H1 (cell line): ENCODE measurements at regions of chr9 and their contacts with region 1.

Region 1: GRCh38 chr9:77648234-77649120 is at the start of gene GNA14:
- DNase-seq: peak in 1 of 2 experiments; percentile 85
- H3K4me3 ChIP-seq: peak within 1 kb of the TSS; percentile 47 to 79 (median 75)
- H3K27ac ChIP-seq: no peak within 1 kb of the TSS
- H3K4me1 ChIP-seq: peaks cover 0 to 17% (median 4%) of the 10 kb centered on the region in 4 experiments; a peak in 6 of 7 replicates
- H3K27me3 ChIP-seq: peaks cover 6 to 32% (median 21%) of the 10 kb centered on the region in 4 experiments
- CTCF ChIP-seq: peak; percentile 26 to 36 (median 27)
- EP300 ChIP-seq: no peak
- POLR2A ChIP-seq: no peak
- RAD21 ChIP-seq: peak; percentile 48 to 54
- total RNA-seq, gene GNA14: 3.2 and 3.4 TPM in 2 replicates

Region 2: GRCh38 chr9:77417566-77417965 is 230.9 kb before region 1 on chr9:
- CTCF ChIA-PET with region 1: no interaction called
- POLR2A ChIA-PET with region 1: no interaction called
- DNase-seq: no peak
- H3K4me3 ChIP-seq: no peak overlapping the region
- H3K27ac ChIP-seq: no peak overlapping the region
- H3K4me1 ChIP-seq: no peaks in the 10 kb centered on the region
- H3K27me3 ChIP-seq: no peaks in the 10 kb centered on the region
- CTCF ChIP-seq: no peak
- EP300 ChIP-seq: no peak
- POLR2A ChIP-seq: no peak
- RAD21 ChIP-seq: no peak

Region 3: GRCh38 chr9:77659926-77660325 is 11.4 kb after region 1 on chr9:
- CTCF ChIA-PET with region 1: interaction called, 17 read pairs
- POLR2A ChIA-PET with region 1: interaction called, 4 read pairs
- DNase-seq: no peak
- H3K4me3 ChIP-seq: no peak overlapping the region
- H3K27ac ChIP-seq: no peak overlapping the region
- H3K4me1 ChIP-seq: no peaks in the 10 kb centered on the region
- H3K27me3 ChIP-seq: no peaks in the 10 kb centered on the region
- CTCF ChIP-seq: no peak
- EP300 ChIP-seq: no peak
- POLR2A ChIP-seq: no peak
- RAD21 ChIP-seq: no peak

Region 4: DNA sequence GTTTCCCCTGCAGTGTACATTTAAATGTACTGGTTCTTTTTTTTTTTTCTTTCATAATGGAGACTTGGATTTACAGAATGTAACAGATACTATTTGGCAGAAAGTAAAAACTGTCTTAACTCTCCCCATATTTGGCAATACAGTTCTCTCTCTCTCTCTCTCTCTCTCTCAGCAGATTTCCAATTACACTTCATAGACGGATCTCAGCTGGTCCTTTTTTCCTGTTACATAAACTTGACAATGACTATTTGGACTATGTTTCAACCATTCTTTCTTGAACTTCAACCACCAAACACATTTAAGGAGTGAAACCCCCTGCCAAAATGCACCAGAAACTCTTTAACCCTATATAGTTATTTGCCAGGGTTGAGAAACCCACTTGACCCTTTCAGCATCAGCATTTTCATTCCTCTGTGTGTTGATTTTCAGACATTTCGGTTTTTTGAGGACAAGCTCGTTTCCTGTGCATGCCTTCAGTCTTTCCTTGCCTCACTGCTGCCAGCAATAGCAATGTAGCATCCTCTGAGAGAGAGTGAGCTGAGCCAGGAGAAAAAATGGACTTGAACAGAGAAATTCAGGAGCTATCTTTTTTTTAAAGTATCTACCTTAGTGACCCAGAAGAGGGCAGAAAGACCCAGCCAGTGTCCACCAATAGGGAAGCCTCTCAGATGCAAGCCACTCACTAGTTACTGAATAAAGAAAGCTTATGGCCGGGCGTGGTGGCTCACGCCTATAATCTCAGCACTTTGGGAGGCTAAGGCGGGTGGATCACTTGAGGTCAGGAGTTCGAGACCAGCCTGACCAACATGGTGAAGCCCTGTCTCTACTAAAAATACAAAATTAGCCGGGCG is 25.7 kb after region 1 on chr9:
- CTCF ChIA-PET with region 1: interaction called, 14 read pairs
- POLR2A ChIA-PET with region 1: no interaction called
- DNase-seq: peak in 1 of 2 experiments; percentile 42
- H3K4me3 ChIP-seq: no peak overlapping the region
- H3K27ac ChIP-seq: no peak overlapping the region
- H3K4me1 ChIP-seq: no peaks in the 10 kb centered on the region
- H3K27me3 ChIP-seq: no peaks in the 10 kb centered on the region
- CTCF ChIP-seq: peak in 1 of 3 experiments; percentile 6; a peak in 1 of 4 replicates
- EP300 ChIP-seq: no peak
- POLR2A ChIP-seq: no peak
- RAD21 ChIP-seq: peak; percentile 32 to 54; a peak in 3 of 4 replicates

Region 5: GRCh38 chr9:77705636-77706035 is 57.2 kb after region 1 on chr9:
- CTCF ChIA-PET with region 1: no interaction called
- POLR2A ChIA-PET with region 1: no interaction called
- DNase-seq: no peak
- H3K4me3 ChIP-seq: no peak overlapping the region
- H3K27ac ChIP-seq: no peak overlapping the region
- H3K4me1 ChIP-seq: no peaks in the 10 kb centered on the region
- H3K27me3 ChIP-seq: no peaks in the 10 kb centered on the region
- CTCF ChIP-seq: no peak
- EP300 ChIP-seq: no peak
- POLR2A ChIP-seq: no peak
- RAD21 ChIP-seq: no peak